CD4-positive, alpha-beta memory T cell (primary cell): ENCODE measurements at regions of chr1 and their contacts with region 1.

Region 1: GRCh38 chr1:1730870-1731269 is 6.7 kb upstream of the CDK11A start:
- DNase-seq: no peak
- H3K4me3 ChIP-seq: no peak overlapping the region
- H3K4me3 Mint-ChIP-seq: no peak overlapping the region
- H3K27ac ChIP-seq: no peak overlapping the region
- H3K27ac Mint-ChIP-seq: peak overlapping the region in 4 of 7 donors; percentile 42 to 70 (median 45)
- H3K4me1 ChIP-seq: peaks cover 31% of the 10 kb centered on the region
- H3K4me1 Mint-ChIP-seq: peaks cover 8 to 29% (median 15%) of the 10 kb centered on the region in 4 donors
- H3K27me3 ChIP-seq: no peaks in the 10 kb centered on the region
- H3K27me3 Mint-ChIP-seq: no peaks in the 10 kb centered on the region

Region 2: DNA sequence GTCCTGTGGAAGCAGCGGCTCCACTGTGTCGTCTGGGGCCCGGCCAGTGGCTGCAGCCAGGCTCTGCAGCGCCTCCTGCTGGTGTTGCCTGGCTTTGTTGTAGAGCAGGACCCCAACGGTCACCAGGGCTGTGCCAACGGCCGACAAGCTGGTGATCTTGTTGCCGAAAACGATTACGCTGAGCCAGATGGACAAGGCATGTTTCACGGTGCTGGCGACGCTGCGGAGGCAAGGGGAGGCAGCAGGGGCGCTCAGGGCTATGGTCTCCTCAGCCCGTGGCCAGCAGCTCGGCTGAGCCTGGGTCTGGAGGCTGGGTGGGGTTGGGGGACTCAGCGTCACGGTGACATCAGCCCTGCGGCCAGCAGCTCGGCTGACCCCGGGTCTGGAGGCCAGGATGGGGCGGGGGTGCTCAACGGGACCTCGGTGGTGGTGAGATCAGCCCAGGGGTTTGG is 65.0 kb before region 1 on chr1:
- CTCF ChIA-PET with region 1: interaction called, 5 read pairs
- POLR2A ChIA-PET with region 1: interaction called, 11 read pairs
- intact Hi-C with region 1: no loop called
- DNase-seq: no peak
- H3K4me3 ChIP-seq: no peak overlapping the region
- H3K4me3 Mint-ChIP-seq: no peak overlapping the region
- H3K27ac ChIP-seq: no peak overlapping the region
- H3K27ac Mint-ChIP-seq: no peak overlapping the region
- H3K4me1 ChIP-seq: peaks cover 11% of the 10 kb centered on the region
- H3K4me1 Mint-ChIP-seq: no peaks in the 10 kb centered on the region
- H3K27me3 ChIP-seq: no peaks in the 10 kb centered on the region
- H3K27me3 Mint-ChIP-seq: no peaks in the 10 kb centered on the region